ENCODE measurements at regions of chr6 and their contacts with region 1.

Region 1: GRCh38 chr6:15691250-15691869 is 28.5 kb upstream of the DTNBP1 start:
- DNase-seq: peak; percentile 88
- ATAC-seq: peak; percentile 99

Region 2: GRCh38 chr6:15735567-15736265 is 44.4 kb after region 1 on chr6:
- intact Hi-C with region 1: no loop called
- DNase-seq: no peak
- ATAC-seq: peak; percentile 41

Region 3: DNA sequence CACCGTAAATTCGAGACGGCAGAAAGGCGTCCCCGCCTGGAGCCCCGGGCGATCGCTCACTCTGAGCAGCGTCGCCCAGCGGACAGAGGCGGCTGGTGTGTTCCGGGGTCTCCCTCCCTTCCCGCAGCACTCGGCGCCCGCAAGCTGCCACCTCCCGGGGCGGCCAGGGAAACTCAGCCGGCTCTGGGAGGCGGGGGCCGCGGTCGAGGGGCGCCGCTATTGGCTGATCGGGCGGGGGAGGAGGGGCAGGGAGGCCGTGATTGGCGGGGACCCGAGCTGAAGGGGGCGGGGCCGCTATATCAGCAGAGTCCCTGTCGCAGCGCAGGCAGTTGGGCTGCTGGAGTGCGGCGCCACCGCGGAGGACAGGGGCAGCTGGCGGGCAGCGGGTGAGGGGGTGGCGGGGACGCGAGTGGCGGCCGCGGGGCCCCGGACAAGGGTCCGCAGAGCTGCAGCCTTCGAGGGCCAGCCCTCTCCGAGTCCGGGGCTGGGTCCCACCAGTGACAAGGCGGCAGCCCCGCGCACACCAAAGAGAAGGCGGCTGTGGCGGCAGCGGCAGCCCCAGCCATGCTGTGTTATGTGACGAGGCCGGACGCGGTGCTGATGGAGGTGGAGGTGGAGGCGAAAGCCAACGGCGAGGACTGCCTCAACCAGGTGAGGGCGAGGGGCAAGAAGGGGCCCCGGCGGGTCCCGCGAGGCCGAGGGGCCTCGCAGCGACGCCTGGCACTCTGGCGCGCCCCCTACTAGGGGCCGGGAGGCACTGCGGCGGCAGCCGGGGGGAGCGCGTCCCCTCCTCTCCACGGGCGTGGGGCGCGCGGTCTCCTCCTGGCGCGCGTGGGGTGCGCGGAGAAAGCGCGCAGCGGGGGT is 437.6 kb after region 1 on chr6 and contains the start of gene MYLIP:
- intact Hi-C with region 1: loop called (anchors 2 kb)
- DNase-seq: peak; percentile 99
- ATAC-seq: peak; percentile 98
- total RNA-seq, gene MYLIP: 12.2 TPM

Region 4: GRCh38 chr6:16184129-16184528 is 492.8 kb after region 1 on chr6:
- intact Hi-C with region 1: loop called (anchors 2 kb)
- DNase-seq: peak; percentile 46
- ATAC-seq: peak; percentile 65

Region 5: DNA sequence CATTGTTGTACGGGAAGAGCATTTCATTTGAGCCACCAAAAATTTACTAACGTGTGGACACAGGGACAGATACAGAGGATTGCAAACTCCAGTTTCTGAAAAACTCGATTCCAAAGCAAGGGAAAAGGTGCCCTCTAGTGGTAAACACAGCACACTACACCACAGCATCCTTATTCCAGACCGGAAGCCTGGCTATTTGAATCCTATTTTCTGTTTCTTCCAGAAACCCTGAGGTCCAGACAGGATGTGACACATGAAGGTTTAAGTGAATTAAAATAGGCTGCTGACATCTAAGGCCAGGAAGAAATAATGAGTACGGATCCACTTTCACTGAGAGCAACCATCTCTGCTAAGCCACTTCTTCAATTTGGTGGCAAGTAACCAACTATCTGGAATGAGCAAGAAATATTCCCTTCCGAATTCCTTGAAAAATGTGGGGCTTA is 515.3 kb after region 1 on chr6:
- intact Hi-C with region 1: loop called (anchors 5 kb)
- DNase-seq: no peak
- ATAC-seq: peak; percentile 92

Measured in Right ventricle myocardium superior (tissue), 1 donor.